ENCODE measurements at regions of chr10 and their contacts with region 1.

Region 1: DNA sequence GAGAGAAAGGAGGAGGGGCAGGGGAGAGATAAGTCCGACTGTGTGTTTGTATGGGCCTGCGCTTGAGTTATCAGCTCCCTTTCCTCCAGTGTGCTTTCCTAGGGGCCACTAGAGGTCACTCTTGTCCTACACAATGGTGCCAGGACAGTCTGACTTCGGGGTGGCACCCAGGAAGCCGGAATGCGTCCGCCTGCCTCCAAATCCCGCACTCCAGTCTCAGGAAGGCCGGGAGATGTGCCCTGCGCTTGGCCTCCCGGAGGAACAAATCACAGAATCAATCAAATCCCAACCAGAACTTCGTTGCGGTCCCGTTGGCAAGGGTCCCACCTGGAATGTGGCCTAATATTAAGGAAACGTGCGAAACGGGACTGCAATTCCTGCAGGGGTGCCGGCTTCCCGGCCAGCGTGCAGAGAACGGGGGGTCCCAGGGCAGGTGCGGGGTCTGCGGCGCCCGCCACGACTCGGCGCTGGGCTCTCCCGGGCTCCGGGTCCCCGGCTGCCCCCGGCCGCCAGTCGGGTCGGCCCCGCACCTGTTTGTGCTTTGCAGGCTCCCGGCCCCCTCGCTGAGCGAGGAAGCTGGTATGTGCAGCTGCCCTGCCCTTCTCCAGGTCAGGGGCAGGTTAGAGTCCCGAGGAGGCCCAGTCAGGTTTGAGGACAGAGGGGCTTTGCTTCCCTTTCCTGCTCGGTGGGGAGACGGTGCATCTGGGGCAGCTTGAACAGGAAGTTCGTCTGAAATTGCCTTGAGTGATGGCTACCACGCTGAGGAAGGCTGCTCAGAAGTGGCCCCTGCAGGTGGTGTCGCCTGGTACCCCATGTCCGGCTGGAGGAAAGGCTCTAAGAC is 21.0 kb upstream of the HPS1 start:
- DNase-seq: peak; percentile 81

Region 2: DNA sequence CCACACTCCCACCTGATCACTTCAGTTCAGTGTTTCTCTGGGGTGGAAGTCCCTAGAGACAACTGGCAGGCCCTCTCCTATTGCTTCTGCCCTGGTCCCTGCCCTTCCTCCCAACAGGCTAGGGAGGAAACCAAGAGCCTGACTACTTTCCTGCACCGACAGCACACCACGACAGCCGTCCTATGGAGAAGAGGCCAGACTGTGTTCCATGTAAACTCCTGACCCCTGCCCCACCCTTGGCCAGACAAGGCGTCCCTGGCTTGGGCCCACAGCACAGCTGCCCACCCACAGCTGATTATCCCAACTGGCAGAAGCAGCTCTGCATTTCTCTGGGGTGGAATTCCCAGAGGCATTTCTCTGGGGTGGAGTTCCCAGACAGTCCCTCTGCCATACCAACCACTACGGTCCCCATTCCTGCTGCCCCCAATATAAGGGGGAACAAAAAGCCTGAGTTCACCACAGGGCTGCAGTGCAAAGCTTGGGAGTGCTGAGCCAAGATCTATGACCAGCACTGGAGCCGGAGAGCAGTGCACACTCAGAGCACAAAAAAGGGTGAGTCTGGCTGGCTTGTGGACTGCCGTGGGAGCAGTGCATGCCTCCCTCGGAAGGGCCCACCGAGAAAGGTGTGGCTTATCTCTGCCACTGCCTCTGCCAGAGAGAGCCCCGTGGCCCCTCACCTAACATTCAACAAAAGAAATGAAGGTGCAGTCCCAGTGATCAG is 574.5 kb after region 1 on chr10:
- in situ Hi-C with region 1: loop called (anchors 25 kb)
- DNase-seq: no peak

Measured in KBM-7 (cell line).